ENCODE measurements at regions of chr5 and their contacts with region 1.

Region 1: DNA sequence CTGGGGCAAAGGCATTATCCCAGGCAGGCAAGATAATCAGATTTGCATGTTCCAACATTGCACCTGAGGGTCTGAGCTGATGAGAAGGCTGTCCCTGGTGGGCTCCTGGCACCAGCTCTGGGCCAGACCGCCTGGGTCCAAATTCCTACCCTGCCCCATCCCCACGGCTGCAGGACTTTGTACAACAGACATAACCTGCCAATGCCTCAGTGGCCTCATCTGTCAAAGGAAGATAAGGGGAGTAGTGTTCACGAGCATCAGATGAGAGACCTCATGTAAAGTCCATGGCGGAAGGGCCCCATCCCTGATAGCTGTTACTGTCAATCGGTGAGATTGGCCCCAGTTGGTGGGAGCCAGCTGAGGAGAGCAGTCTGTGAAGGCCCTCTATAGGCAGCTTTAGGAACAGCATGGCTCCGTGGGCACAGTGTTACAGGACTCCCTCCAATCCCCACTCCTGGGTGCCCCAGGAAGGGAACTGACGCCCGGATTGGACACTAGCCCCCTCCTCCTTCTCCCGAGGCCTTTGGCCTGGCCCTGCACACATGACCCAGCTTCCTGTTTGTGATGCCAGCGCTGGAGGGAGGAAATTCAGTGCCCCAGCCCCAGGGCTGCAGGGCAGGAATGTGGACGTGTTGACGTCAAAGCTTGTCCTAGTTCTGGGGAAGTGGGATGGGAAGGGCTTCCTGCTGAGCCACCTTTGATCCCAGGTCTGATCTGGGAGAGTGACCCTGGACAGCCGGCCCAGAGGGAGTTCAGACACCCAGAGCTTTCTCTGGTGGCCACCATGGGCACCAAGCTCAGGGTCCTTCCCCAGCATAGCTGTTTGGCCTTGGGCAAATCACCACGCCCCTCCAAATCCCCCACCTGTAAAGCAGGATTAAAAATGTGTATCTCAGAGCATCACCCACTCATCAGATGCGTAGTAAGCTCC is 56.2 kb downstream of the DUSP1 start:
- DNase-seq: peak; percentile 72
- H3K4me3 Mint-ChIP-seq: no peak overlapping the region
- H3K27ac Mint-ChIP-seq: no peak overlapping the region
- H3K4me1 Mint-ChIP-seq: no peaks in the 10 kb centered on the region
- H3K27me3 Mint-ChIP-seq: peaks cover 7% of the 10 kb centered on the region

Region 2: DNA sequence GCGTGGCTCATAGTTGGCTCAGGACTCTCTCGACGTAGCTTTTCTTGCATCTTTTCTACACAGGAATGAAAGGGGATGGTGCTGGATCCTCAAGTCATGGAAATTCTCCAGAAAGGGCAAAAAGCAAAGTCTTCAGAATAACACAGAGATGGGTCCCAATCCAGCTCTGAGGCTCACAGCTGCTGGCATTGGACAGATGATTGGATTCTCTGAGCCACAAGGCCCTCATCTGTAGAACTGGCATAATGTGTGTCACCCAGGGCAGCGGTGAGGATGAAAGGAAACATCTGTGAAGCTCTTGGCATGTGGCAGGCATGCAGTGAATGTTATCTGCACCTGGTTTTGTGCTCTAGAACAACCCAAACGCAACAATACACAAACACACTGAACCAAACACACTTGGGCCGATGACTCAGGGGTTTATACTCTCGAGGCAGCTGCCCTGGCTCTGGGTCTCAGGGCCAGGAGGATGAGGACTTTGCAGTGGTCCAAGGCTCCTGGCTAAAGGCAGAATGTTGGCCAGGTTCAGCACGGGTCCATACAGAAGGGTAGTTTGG is 367.2 kb before region 1 on chr5:
- CTCF ChIA-PET with region 1: no interaction called
- POLR2A ChIA-PET with region 1: no interaction called
- intact Hi-C with region 1: no loop called
- DNase-seq: no peak
- H3K4me3 Mint-ChIP-seq: no peak overlapping the region
- H3K27ac Mint-ChIP-seq: no peak overlapping the region
- H3K4me1 Mint-ChIP-seq: no peaks in the 10 kb centered on the region
- H3K27me3 Mint-ChIP-seq: no peaks in the 10 kb centered on the region

Region 3: DNA sequence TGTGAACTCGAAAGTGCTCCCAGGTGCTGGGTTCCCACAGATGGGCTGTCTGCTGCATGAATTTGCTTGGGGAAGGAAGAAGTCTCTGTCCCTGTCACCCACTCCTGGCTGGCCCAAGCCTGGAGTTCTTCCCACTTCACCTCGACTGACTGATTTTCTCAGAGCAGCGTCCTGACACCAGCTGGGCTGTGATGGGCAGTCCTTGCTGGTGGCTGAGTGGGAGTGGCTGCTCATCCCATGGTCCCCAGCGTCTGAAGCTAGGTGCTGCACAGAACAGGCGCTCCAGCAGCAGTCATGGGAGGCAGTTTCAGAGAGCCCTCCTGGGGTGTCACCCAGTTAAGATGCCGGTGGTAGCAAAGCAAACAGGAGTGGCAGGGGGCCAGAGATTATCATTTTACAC is 83.8 kb before region 1 on chr5:
- CTCF ChIA-PET with region 1: no interaction called
- POLR2A ChIA-PET with region 1: no interaction called
- intact Hi-C with region 1: no loop called
- DNase-seq: no peak
- H3K4me3 Mint-ChIP-seq: no peak overlapping the region
- H3K27ac Mint-ChIP-seq: no peak overlapping the region
- H3K4me1 Mint-ChIP-seq: no peaks in the 10 kb centered on the region
- H3K27me3 Mint-ChIP-seq: no peaks in the 10 kb centered on the region

Region 4: GRCh38 chr5:172764849-172765765 is 50.4 kb after region 1 on chr5:
- CTCF ChIA-PET with region 1: interaction called, 47 read pairs
- POLR2A ChIA-PET with region 1: interaction called, 3 read pairs
- intact Hi-C with region 1: no loop called
- DNase-seq: peak; percentile 96
- H3K4me3 Mint-ChIP-seq: peak overlapping the region; percentile 78
- H3K27ac Mint-ChIP-seq: peak overlapping the region; percentile 90
- H3K4me1 Mint-ChIP-seq: peaks cover 46% of the 10 kb centered on the region
- H3K27me3 Mint-ChIP-seq: no peaks in the 10 kb centered on the region

Region 5: GRCh38 chr5:172777881-172778814 is 63.4 kb after region 1 on chr5:
- CTCF ChIA-PET with region 1: interaction called, 47 read pairs
- POLR2A ChIA-PET with region 1: interaction called, 4 read pairs
- intact Hi-C with region 1: no loop called
- DNase-seq: peak; percentile 47
- H3K4me3 Mint-ChIP-seq: peak overlapping the region; percentile 38
- H3K27ac Mint-ChIP-seq: peak overlapping the region; percentile 87
- H3K4me1 Mint-ChIP-seq: peaks cover 61% of the 10 kb centered on the region
- H3K27me3 Mint-ChIP-seq: no peaks in the 10 kb centered on the region

Region 6: GRCh38 chr5:172902497-172903200 is 187.9 kb after region 1 on chr5:
- CTCF ChIA-PET with region 1: interaction called, 21 read pairs
- POLR2A ChIA-PET with region 1: no interaction called
- intact Hi-C with region 1: no loop called
- DNase-seq: no peak
- H3K4me3 Mint-ChIP-seq: no peak overlapping the region
- H3K27ac Mint-ChIP-seq: no peak overlapping the region
- H3K4me1 Mint-ChIP-seq: peaks cover 11% of the 10 kb centered on the region
- H3K27me3 Mint-ChIP-seq: no peaks in the 10 kb centered on the region

Region 7: GRCh38 chr5:172932313-172933017 is 217.7 kb after region 1 on chr5:
- CTCF ChIA-PET with region 1: interaction called, 393 read pairs
- POLR2A ChIA-PET with region 1: interaction called, 3 read pairs
- intact Hi-C with region 1: loop called (anchors 1 kb)
- DNase-seq: peak; percentile 82
- H3K4me3 Mint-ChIP-seq: no peak overlapping the region
- H3K27ac Mint-ChIP-seq: no peak overlapping the region
- H3K4me1 Mint-ChIP-seq: peaks cover 6% of the 10 kb centered on the region
- H3K27me3 Mint-ChIP-seq: no peaks in the 10 kb centered on the region

Region 8: GRCh38 chr5:172958331-172959046 is 243.7 kb after region 1 on chr5:
- CTCF ChIA-PET with region 1: interaction called, 5 read pairs
- POLR2A ChIA-PET with region 1: no interaction called
- intact Hi-C with region 1: loop called (anchors 1 kb)
- DNase-seq: peak; percentile 71
- H3K4me3 Mint-ChIP-seq: peak overlapping the region; percentile 98
- H3K27ac Mint-ChIP-seq: peak overlapping the region; percentile 83
- H3K4me1 Mint-ChIP-seq: peaks cover 18% of the 10 kb centered on the region
- H3K27me3 Mint-ChIP-seq: no peaks in the 10 kb centered on the region

Region 9: DNA sequence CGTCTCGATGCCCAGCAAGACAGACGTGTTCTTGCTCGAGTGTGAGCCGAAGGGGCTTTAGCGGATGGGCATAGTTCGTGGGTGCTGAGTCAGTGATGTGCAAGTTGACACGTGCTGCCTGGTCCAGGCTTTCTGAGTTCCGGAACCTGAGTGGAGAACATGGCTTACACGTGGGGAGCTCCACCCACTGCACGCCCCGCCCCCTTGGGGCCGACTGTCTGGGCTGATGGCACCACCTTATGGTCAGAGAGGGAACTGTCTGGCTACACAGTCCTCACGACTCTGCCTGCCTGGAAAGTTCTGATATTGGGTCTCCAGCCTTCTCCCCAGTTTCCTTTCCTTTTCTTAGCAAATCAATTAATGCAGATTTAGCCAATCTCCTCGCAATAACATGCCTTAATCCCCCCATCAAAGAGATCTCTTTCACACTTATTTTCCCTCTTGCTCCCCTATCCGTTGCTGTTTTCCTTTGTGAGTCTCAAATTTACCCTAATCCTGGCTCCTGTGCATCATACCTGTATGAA is 617.3 kb after region 1 on chr5:
- CTCF ChIA-PET with region 1: interaction called, 4 read pairs
- POLR2A ChIA-PET with region 1: no interaction called
- intact Hi-C with region 1: loop called (anchors 10 kb)
- DNase-seq: peak; percentile 91
- H3K4me3 Mint-ChIP-seq: no peak overlapping the region
- H3K27ac Mint-ChIP-seq: no peak overlapping the region
- H3K4me1 Mint-ChIP-seq: peaks cover 22% of the 10 kb centered on the region
- H3K27me3 Mint-ChIP-seq: peaks cover 39% of the 10 kb centered on the region

Region 10: DNA sequence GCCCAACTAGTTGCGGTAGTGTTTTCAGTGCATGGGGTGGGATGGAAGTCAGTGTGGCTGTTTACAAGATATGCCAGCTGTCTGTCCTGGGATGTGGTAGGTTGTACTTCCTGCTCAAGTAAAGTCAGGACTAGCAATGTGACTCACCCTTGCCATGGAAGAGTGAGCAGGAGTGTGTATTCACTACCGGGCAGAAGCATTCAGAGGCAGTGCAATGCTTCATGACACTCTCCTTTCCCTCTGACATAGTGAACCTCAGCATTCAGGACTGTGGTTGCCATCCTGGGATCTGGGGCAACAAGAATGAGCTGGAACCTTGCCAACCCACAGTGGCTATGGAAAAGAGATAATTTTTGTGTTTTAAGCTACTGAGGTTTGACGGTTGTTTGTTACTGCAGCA is 832.8 kb after region 1 on chr5:
- CTCF ChIA-PET with region 1: no interaction called
- POLR2A ChIA-PET with region 1: no interaction called
- intact Hi-C with region 1: no loop called
- DNase-seq: no peak
- H3K4me3 Mint-ChIP-seq: no peak overlapping the region
- H3K27ac Mint-ChIP-seq: no peak overlapping the region
- H3K4me1 Mint-ChIP-seq: no peaks in the 10 kb centered on the region
- H3K27me3 Mint-ChIP-seq: peaks cover 3% of the 10 kb centered on the region